WTC11 (cell line): ENCODE measurements at regions of chr1 and their contacts with region 1.

Region 1: DNA sequence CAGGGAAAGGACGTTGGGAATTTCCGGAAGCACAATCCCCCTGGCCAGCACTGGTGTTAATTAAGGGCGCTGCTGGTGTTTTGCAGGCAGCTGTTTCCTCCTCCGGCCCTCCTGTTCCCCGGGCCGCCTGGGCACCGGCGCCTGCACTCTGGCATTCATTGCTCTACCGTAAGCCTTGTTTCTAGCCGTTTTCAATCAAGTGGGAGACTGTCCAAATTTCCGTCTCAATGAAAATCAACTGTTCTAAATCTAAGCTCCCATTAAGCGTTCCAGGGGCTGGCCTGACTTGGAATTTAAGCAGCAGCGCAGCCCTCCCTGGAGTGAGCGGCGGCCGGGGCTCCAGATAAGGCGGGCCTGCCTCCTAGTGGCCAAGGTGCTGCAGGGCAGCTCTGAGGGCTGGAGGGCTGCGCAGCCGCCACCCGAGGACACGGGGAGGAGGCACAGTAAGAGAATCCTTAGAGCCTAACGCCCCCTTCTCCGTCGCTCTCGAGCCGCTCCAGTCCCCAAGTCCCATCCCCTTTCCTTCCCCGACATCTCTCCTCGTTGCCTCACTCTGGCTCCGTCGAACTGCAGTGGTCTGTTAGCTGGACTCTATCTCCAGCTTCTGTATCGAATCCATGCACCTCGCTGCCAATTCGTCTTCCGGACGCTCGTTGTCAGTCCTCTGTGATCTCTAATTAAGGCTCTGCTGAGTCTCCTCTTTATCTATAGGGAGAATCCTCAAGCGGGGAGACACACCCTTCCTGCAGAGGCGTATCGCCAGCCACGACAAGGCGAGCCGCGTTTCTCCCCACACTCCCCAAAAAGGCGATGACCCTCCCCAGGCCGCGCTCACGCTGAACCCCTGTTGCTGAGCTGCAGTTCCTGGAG is 57.8 kb upstream of the LRRC8D start:
- DNase-seq: peak; percentile 92
- ATAC-seq: peak; percentile 96
- H3K4me3 Mint-ChIP-seq: peak overlapping the region; percentile 94
- H3K27ac Mint-ChIP-seq: no peak overlapping the region
- H3K4me1 Mint-ChIP-seq: peaks cover 14% of the 10 kb centered on the region
- H3K27me3 Mint-ChIP-seq: peaks cover 36% of the 10 kb centered on the region
- CTCF ChIP-seq: peak; percentile 94

Region 2: GRCh38 chr1:89407360-89407759 is 355.7 kb before region 1 on chr1:
- CTCF ChIA-PET with region 1: no interaction called
- POLR2A ChIA-PET with region 1: no interaction called
- DNase-seq: no peak
- ATAC-seq: no peak
- H3K4me3 Mint-ChIP-seq: no peak overlapping the region
- H3K27ac Mint-ChIP-seq: no peak overlapping the region
- H3K4me1 Mint-ChIP-seq: peaks cover 13% of the 10 kb centered on the region
- H3K27me3 Mint-ChIP-seq: no peaks in the 10 kb centered on the region; the same call in 1 of the 2 replicates
- CTCF ChIP-seq: no peak

Region 3: GRCh38 chr1:89483010-89483756 is 279.8 kb before region 1 on chr1:
- CTCF ChIA-PET with region 1: interaction called, 39 read pairs
- POLR2A ChIA-PET with region 1: interaction called, 3 read pairs
- DNase-seq: peak; percentile 74
- ATAC-seq: peak; percentile 82
- H3K4me3 Mint-ChIP-seq: no peak overlapping the region
- H3K27ac Mint-ChIP-seq: no peak overlapping the region
- H3K4me1 Mint-ChIP-seq: no peaks in the 10 kb centered on the region
- H3K27me3 Mint-ChIP-seq: no peaks in the 10 kb centered on the region; the same call in 1 of the 2 replicates
- CTCF ChIP-seq: peak; percentile 60

Region 4: GRCh38 chr1:89608319-89608983 is 154.6 kb before region 1 on chr1:
- CTCF ChIA-PET with region 1: interaction called, 22 read pairs
- POLR2A ChIA-PET with region 1: no interaction called
- DNase-seq: no peak
- ATAC-seq: no peak
- H3K4me3 Mint-ChIP-seq: no peak overlapping the region
- H3K27ac Mint-ChIP-seq: no peak overlapping the region
- H3K4me1 Mint-ChIP-seq: peaks cover 8% of the 10 kb centered on the region
- H3K27me3 Mint-ChIP-seq: no peaks in the 10 kb centered on the region
- CTCF ChIP-seq: no peak

Region 5: DNA sequence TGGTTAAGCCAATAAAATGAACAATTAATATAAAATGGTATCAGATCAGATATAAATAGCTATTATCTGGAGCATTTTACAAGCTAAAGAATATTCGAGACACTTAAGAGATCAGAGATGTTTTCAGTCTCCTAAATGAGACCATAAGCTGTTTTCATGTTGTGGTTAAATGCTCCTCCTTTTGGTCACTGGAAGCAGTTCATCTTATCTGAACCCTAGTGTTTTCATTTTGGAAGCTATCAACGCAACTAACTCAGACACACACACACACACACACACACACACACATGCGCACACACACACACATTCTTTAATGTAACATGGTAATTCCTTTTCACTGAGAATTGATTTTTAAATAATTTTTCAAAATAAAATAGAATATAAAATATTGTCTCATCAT is 140.1 kb before region 1 on chr1:
- CTCF ChIA-PET with region 1: interaction called, 36 read pairs
- POLR2A ChIA-PET with region 1: no interaction called
- DNase-seq: no peak
- ATAC-seq: no peak; the same call in 1 of the 2 replicates
- H3K4me3 Mint-ChIP-seq: no peak overlapping the region
- H3K27ac Mint-ChIP-seq: no peak overlapping the region
- H3K4me1 Mint-ChIP-seq: no peaks in the 10 kb centered on the region
- H3K27me3 Mint-ChIP-seq: no peaks in the 10 kb centered on the region
- CTCF ChIP-seq: no peak

Region 6: DNA sequence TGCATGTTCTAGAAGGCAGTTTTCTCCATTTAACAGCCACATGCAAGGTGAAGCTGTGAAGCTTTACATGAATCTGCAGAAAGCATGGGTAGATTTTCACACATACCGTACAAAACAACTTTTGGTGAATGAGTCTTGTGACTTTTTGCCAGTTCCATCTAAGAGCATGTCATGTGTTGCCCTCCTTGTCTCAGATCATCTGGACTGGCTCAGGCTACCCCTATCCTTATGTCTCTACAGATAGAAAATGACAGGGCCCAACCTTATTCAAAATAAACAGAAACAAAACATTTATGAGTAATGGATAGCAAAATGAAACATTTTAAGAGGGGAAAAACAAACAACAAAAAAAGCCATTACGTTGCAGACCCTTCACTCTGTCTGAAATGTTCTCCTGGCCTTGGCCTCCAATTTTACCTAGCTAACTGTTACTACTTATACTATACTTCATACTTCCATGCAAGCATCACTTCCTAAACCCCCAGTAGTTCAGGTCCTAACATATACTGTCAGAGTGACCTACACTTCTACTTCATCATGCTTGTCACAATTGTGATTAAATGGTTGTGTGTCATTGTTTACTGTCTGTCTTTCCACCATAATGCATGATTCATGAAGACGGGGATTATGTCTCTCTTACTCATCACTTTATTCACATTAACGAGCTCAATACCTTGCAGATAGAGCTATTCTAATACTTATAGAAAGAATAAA is 91.1 kb before region 1 on chr1:
- CTCF ChIA-PET with region 1: interaction called, 11 read pairs
- POLR2A ChIA-PET with region 1: no interaction called
- DNase-seq: no peak
- ATAC-seq: no peak
- H3K4me3 Mint-ChIP-seq: no peak overlapping the region
- H3K27ac Mint-ChIP-seq: no peak overlapping the region
- H3K4me1 Mint-ChIP-seq: no peaks in the 10 kb centered on the region
- H3K27me3 Mint-ChIP-seq: no peaks in the 10 kb centered on the region
- CTCF ChIP-seq: no peak